Psoas muscle (tissue), 8 donors: ENCODE measurements at regions of chrX and their contacts with region 1.

Region 1: GRCh38 chrX:49858341-49858740 is 20.9 kb upstream of the USP27X start:
- DNase-seq: no peak
- ATAC-seq: no peak
- H3K4me3 ChIP-seq: no peak overlapping the region
- H3K27ac ChIP-seq: no peak overlapping the region
- H3K4me1 ChIP-seq: no peaks in the 10 kb centered on the region
- H3K27me3 ChIP-seq: peaks cover 0 to 5% (median 0%) of the 10 kb centered on the region in 3 donors
- CTCF ChIP-seq: no peak

Region 2: GRCh38 chrX:49644991-49645637 is 213.2 kb before region 1 on chrX:
- intact Hi-C with region 1: no loop called
- DNase-seq: no peak
- ATAC-seq: no peak
- H3K4me3 ChIP-seq: no peak overlapping the region
- H3K27ac ChIP-seq: no peak overlapping the region
- H3K4me1 ChIP-seq: no peaks in the 10 kb centered on the region
- H3K27me3 ChIP-seq: no peaks in the 10 kb centered on the region
- CTCF ChIP-seq: no peak

Region 3: GRCh38 chrX:49838374-49838773 is 20.0 kb before region 1 on chrX:
- intact Hi-C with region 1: loop called in 1 of 2 experiments (anchors 1 kb)
- DNase-seq: no peak
- ATAC-seq: peak in 2 of 4 donors; percentile 49 to 61
- H3K4me3 ChIP-seq: no peak overlapping the region
- H3K27ac ChIP-seq: no peak overlapping the region
- H3K4me1 ChIP-seq: no peaks in the 10 kb centered on the region
- H3K27me3 ChIP-seq: peaks cover 0 to 3% (median 0%) of the 10 kb centered on the region in 3 donors
- CTCF ChIP-seq: peak; percentile 60

Region 4: DNA sequence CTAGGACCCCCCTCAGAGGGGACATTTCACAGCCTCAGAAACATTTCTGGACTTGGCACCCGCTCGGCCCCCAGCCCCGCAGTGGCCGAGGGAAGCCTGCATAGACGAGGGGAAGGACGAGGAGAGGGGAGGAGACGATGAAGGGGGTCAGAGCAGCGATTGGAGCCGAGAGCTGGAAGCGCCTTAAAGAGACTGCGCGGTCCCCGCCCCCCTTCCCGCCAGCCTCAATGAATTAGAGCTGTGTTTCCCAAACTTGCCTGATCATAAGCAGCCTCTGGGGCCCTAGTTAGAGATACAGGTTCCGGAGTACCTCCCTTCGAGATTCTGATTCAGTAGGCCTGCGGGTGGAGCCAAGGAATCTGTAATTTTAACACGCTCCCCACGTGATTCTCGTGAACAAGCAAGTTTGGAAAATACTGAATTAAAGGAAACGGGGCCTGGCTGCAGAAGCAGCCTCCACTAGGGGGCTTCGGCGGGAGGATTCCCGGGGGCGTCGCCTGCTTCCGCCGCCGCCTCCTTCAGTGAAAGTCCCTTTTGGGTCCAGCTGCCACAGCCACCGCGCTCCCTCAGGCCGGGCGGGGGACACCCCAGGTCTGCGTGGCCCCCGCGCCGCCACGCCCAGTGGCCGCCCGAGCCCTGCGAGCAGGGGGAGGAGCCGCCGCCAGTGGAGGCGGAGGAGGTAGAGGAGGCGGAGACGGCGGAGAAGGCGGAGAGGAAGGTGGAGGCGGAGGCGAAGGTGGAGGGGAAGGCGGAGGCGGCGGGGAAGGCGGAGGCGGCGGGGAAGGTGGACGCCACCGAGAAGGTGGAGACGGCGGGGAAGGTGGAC is 20.7 kb after region 1 on chrX and contains the start of gene USP27X:
- intact Hi-C with region 1: no loop called
- DNase-seq: peak; percentile 71 to 86
- ATAC-seq: peak; percentile 89 to 96 (median 93)
- H3K4me3 ChIP-seq: peak within 1 kb of the TSS; percentile 70
- H3K27ac ChIP-seq: peak within 1 kb of the TSS; percentile 80
- H3K4me1 ChIP-seq: no peaks in the 10 kb centered on the region
- H3K27me3 ChIP-seq: peaks cover 0 to 3% (median 0%) of the 10 kb centered on the region in 3 donors
- CTCF ChIP-seq: peak; percentile 36
- total RNA-seq, gene USP27X: 1.5 to 2.5 (median 2.1) TPM

Region 5: GRCh38 chrX:49934148-49934547 is 75.8 kb after region 1 on chrX:
- intact Hi-C with region 1: no loop called
- DNase-seq: no peak
- ATAC-seq: no peak
- H3K4me3 ChIP-seq: no peak overlapping the region
- H3K27ac ChIP-seq: no peak overlapping the region
- H3K4me1 ChIP-seq: no peaks in the 10 kb centered on the region
- H3K27me3 ChIP-seq: peaks cover 0 to 3% (median 0%) of the 10 kb centered on the region in 3 donors
- CTCF ChIP-seq: no peak